Activated T-helper 1 cell treated with anti-CD3 and anti-CD28 coated beads, Interleukin-12 subunit alpha, Interleukin-12 subunit beta, Interleukin-2, Interleukin-4 antibody, amounts not matched to agents 30 ng/mL and 10 ng/mL and 1 ng/mL, durations not matched to agents 14 hours and 24 hours and 36 hours (primary cell): ENCODE measurements at regions of chr3 and their contacts with region 1.

Region 1: DNA sequence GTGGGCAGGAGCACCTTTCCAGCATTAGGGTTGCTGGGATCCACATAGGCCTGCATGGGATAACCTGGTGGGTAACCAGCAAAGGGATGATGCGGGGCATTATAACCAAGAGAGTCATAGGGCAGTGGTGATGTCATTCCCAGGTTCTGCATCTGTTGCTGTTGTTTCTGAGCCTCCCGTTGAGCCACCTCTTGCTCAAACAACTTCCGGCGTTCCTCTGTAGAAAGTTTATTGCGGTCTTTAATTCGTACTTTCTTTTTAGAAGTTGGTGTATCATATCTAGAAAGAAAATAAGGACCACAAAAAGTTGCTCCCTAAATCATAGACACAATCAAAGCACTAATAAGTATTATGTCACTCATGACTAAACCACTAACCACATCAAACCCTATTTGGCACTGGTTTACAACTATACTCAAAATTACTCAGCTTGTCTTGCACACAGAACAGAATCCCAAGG is 77.8 kb downstream of the NBEAL2 start:
- DNase-seq: peak; percentile 37
- H3K4me3 Mint-ChIP-seq: no peak overlapping the region
- H3K27ac Mint-ChIP-seq: peak overlapping the region; percentile 55
- H3K4me1 Mint-ChIP-seq: peaks cover 41% of the 10 kb centered on the region
- H3K27me3 Mint-ChIP-seq: no peaks in the 10 kb centered on the region

Region 2: DNA sequence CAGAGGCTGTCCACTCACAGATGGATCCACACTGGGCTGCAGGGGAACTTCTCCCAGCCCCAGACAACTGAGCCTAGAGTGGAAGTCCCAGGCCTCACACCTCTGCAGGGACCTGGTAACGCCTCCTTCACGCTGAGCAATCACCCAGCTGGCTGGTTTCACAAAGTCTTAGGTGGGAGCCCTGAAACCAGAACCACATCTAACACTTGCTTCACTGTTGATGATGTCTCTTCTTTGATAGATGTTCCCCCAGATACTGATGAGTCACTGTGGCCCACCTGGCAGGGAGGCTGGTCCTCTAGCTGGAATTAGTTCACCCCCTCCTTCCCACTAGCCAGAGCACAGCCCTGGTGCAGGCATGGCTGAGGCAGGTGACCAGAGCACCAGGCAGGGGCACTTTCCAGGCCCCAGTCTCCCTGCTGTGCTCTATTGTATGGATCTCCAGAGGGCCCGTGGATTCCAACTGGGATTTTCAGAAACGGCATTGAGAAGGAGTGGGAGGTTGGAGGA is 227.5 kb before region 1 on chr3:
- intact Hi-C with region 1: no loop called
- DNase-seq: no peak
- H3K4me3 Mint-ChIP-seq: no peak overlapping the region
- H3K27ac Mint-ChIP-seq: no peak overlapping the region
- H3K4me1 Mint-ChIP-seq: peaks cover 17% of the 10 kb centered on the region
- H3K27me3 Mint-ChIP-seq: peaks cover 5% of the 10 kb centered on the region

Region 3: GRCh38 chr3:46909535-46910442 is 147.5 kb before region 1 on chr3:
- intact Hi-C with region 1: no loop called
- DNase-seq: peak; percentile 61
- H3K4me3 Mint-ChIP-seq: no peak overlapping the region
- H3K27ac Mint-ChIP-seq: no peak overlapping the region
- H3K4me1 Mint-ChIP-seq: peaks cover 15% of the 10 kb centered on the region
- H3K27me3 Mint-ChIP-seq: no peaks in the 10 kb centered on the region

Region 4: DNA sequence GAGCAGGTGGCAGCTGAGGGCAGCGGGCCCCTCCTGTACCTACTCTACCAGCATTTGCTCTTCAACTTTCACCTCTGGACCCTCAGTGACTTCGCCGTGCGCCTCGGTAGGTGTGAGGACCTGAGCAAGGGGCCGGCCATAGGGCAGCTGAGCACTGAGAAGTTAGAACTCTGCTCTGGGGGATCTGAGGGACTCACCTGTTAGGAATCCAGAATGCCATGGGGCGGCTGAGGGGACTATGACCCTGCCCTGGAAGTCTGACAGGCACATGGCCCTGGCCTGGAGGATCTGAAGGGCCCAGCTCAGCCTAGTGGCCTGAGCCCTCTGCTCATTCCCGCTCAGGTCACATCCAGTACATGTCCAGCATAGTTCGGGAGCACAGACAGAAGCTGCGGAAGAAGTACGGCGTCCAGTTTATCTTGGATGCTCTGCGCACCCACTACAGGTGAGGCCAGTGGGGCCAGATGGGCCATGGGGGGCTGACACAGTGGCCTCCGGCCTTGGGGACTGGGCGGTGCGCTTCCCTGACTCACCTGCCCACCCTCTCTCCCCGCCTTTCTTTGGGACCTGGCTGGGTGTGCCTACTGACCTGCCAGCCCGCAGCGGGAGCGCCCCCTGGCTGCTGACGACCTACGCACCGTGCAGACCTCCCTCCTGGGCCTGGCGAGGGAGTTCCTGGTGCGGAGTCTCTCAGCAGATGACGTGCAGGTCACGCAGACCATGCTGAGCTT is 59.0 kb before region 1 on chr3:
- intact Hi-C with region 1: no loop called
- DNase-seq: peak; percentile 47
- H3K4me3 Mint-ChIP-seq: no peak overlapping the region
- H3K27ac Mint-ChIP-seq: no peak overlapping the region
- H3K4me1 Mint-ChIP-seq: peaks cover 7% of the 10 kb centered on the region
- H3K27me3 Mint-ChIP-seq: no peaks in the 10 kb centered on the region

Region 5: DNA sequence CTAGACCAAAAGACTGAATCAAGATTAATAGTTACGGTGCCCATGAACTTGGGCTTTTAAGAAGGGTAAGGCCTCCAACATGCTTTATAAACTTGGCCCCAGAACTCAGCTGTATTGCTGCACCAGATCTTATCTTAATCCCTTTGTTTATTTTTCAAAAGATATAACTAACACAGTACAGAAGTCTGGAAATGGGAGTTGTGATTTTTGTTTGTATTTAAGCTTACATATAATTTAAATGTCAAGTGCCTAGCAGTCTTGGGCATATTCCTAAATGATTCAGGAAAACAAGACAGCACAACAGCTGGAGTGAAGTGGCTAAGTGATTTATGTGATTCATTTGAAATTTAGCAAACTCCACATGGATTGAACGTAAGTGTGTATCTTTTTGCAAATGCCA is 21.6 kb before region 1 on chr3:
- intact Hi-C with region 1: loop called (anchors 1 kb)
- DNase-seq: no peak
- H3K4me3 Mint-ChIP-seq: no peak overlapping the region
- H3K27ac Mint-ChIP-seq: no peak overlapping the region
- H3K4me1 Mint-ChIP-seq: peaks cover 21% of the 10 kb centered on the region
- H3K27me3 Mint-ChIP-seq: no peaks in the 10 kb centered on the region

Region 6: GRCh38 chr3:47082519-47082918 is 25.3 kb after region 1 on chr3:
- intact Hi-C with region 1: loop called (anchors 1 kb)
- DNase-seq: no peak
- H3K4me3 Mint-ChIP-seq: no peak overlapping the region
- H3K27ac Mint-ChIP-seq: no peak overlapping the region
- H3K4me1 Mint-ChIP-seq: peaks cover 33% of the 10 kb centered on the region
- H3K27me3 Mint-ChIP-seq: no peaks in the 10 kb centered on the region

Region 7: DNA sequence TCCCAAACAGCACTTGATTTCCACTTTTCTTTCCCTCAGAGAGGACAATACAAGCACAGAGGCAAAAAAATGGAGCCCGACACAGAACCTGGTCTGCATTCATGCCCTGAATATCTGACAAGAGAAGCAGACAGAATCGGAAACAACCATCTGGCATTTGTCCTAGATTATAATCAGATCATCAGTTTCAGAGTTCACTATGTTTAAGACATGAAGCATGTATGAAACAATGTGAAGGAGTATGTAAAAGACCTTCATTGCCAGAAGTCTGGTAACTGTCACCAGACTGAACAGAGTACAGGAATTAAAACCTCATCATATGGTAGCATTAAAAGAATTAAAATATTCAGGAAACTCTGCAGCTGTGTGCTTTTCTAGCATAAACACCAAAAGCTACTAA is 41.7 kb after region 1 on chr3:
- intact Hi-C with region 1: no loop called
- DNase-seq: no peak
- H3K4me3 Mint-ChIP-seq: no peak overlapping the region
- H3K27ac Mint-ChIP-seq: no peak overlapping the region
- H3K4me1 Mint-ChIP-seq: no peaks in the 10 kb centered on the region
- H3K27me3 Mint-ChIP-seq: no peaks in the 10 kb centered on the region